Sciatic nerve (tissue), 2 donors: ENCODE measurements at regions of chr4 and their contacts with region 1.

Region 1: GRCh38 chr4:85028910-85029309 is 62.4 kb upstream of the WDFY3 start:
- DNase-seq: no peak
- ATAC-seq: no peak

Region 2: DNA sequence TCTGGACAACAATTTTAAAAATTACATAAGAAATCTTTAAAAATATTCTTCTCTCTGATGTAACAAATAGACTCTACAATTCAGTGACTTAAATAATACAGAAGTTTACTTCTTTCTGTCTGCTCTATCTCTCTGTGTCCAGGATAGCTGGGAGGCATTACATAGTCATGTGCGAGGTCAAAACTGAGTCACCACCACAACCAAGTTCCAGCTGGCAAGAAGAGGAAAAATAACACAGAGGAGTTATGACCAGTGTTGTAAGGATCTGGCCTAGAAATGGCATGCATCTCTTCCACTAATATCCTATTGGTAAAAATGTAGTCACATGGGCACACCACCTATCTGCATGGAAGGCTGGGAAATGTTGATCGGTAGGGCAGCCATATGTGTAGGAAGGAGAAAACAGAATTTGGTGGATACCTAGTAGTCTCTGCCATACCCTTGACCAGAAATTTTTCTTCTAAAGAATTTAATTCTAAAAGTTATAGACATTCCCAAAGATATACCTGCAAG is 23.0 kb before region 1 on chr4:
- intact Hi-C with region 1: loop called (anchors 1 kb)
- DNase-seq: no peak
- ATAC-seq: no peak